Psoas muscle (tissue), 8 donors: ENCODE measurements at regions of chr10 and their contacts with region 1.

Region 1: GRCh38 chr10:13099666-13100348 is at the start of gene OPTN:
- DNase-seq: peak; percentile 79 to 91
- ATAC-seq: peak; percentile 80 to 89 (median 88)
- H3K4me3 ChIP-seq: peak within 1 kb of the TSS; percentile 99
- H3K27ac ChIP-seq: peak within 1 kb of the TSS; percentile 99
- H3K4me1 ChIP-seq: peaks cover 13% of the 10 kb centered on the region
- H3K27me3 ChIP-seq: no peaks in the 10 kb centered on the region
- CTCF ChIP-seq: peak; percentile 72
- total RNA-seq, gene OPTN: 178 to 561 (median 312) TPM

Region 2: DNA sequence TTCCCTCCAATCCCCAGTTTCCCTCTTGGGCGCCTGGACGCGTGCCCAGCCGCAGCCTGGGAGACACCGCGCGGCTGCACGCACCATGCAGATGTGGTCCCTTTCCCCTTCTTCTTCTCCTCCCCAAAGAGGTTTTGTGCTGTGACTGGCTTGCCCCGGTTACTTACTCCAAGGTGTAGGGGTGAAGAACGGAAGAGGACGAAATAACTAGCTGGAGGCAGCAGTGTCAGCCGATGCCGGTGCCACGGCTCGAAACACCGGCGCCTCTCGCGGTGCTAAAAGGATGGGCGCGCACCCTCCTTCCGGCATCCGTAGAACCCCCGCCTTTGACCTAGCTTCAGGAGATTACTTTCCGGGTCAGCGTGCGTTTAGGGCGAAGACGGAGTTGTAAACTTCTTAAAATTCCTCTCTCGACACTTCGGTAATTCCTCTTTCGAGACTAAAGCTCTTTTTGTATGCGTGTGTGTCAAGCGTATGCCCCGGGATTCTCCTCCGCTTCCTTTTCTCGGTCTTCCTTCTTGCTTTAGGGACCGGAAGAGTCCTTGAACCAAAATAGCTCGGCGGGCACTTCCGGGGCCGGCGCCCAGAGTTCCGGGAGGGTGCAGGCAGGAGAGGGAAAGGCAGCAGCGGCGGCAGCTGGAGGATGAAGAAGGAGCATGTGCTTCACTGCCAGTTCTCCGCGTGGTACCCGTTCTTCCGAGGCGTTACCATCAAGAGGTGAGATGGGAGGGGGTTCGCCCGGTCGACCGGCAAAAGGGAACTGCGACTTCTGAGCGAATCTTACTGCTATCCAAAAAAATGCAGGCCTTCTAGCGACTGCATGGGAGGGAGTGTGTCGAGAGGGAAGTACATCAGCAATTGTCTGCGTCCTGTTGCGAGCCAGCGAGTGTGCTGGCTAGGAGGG is 904.0 kb before region 1 on chr10 and contains the starts of genes CDC123 and NUDT5:
- intact Hi-C with region 1: loop called in 1 of 2 experiments (anchors 5 kb)
- DNase-seq: peak; percentile 86 to 91
- ATAC-seq: peak; percentile 96 to 98 (median 98)
- H3K4me3 ChIP-seq: peak within 1 kb of the TSS; percentile 98
- H3K27ac ChIP-seq: peak within 1 kb of the TSS; percentile 97
- H3K4me1 ChIP-seq: peaks cover 20% of the 10 kb centered on the region
- H3K27me3 ChIP-seq: no peaks in the 10 kb centered on the region
- CTCF ChIP-seq: no peak
- total RNA-seq, gene CDC123: 29.1 to 46.1 (median 38.6) TPM
- total RNA-seq, gene NUDT5: 4.8 to 5.2 (median 5.2) TPM

Region 3: DNA sequence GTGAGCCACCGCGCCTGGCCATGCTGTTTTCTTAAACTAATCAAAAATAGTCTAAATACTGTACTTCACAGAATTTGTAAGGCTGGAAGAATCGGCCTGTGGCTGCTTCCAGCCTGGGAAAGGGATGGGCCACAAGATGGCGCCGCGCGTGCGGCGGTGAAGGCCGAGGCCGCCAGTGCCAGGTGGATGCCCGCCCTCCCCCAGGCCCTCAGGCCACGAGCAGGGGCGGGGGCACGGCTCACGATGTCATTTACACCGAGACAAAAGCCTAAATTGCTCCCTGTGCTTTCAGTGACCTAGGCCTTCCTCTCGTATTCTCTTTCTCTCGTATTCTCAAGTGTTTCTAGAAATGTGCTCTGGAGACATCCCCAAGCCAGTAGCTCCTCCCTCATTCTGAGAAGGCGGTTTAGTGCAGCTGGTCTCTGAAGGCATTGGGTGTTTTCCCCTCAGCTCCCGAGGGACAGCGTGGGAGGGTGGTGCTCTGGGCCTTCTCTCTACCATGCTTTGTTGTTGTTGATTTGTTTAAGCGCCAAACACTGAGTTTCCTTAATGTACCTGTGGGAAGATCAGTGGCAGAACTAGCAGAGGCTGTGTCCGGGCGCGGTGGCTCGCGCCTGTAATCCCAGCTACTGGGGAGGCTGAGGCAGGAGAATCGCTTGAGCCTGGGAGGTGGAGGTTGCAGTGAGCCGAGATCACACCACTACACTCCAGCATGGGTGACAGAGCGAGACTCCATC is 835.4 kb before region 1 on chr10:
- intact Hi-C with region 1: loop called in 1 of 2 experiments (anchors 10 kb)
- DNase-seq: peak; percentile 75 to 84
- ATAC-seq: peak; percentile 64 to 96 (median 82)
- H3K4me3 ChIP-seq: peak overlapping the region; percentile 58
- H3K27ac ChIP-seq: no peak overlapping the region
- H3K4me1 ChIP-seq: no peaks in the 10 kb centered on the region
- H3K27me3 ChIP-seq: no peaks in the 10 kb centered on the region
- CTCF ChIP-seq: peak; percentile 64

Region 4: DNA sequence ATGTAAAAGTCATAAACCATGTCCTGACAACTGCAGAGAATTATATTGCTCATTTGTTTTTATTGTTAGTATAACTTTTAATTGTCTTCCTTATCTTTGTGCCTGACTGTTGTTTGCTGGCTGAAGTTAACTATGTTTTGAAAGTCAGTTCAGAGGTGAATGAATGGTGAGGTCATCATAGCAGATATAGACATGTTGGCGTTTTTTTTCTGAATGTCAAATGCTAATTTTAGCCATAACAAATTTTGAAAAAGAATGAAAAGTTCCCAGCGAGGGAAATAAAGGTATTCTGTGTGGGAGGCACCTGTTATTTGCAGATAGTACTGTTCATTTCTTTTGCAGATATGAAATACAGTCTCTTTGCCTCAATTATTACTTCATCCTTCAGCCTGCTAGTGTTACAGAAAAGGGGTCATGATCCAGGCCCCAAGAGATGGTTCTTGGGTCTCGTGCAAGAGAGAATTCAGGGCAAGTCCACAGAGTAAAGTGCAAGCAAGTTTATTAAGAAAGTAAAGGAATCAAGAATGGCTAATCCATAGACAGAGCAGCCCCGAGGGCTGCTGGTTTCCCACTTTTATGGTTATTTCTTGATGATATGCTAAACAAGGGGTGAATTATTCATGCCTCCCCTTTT is 654.0 kb before region 1 on chr10:
- intact Hi-C with region 1: no loop called
- DNase-seq: no peak
- ATAC-seq: no peak
- H3K4me3 ChIP-seq: no peak overlapping the region
- H3K27ac ChIP-seq: no peak overlapping the region
- H3K4me1 ChIP-seq: no peaks in the 10 kb centered on the region
- H3K27me3 ChIP-seq: no peaks in the 10 kb centered on the region
- CTCF ChIP-seq: no peak

Region 5: DNA sequence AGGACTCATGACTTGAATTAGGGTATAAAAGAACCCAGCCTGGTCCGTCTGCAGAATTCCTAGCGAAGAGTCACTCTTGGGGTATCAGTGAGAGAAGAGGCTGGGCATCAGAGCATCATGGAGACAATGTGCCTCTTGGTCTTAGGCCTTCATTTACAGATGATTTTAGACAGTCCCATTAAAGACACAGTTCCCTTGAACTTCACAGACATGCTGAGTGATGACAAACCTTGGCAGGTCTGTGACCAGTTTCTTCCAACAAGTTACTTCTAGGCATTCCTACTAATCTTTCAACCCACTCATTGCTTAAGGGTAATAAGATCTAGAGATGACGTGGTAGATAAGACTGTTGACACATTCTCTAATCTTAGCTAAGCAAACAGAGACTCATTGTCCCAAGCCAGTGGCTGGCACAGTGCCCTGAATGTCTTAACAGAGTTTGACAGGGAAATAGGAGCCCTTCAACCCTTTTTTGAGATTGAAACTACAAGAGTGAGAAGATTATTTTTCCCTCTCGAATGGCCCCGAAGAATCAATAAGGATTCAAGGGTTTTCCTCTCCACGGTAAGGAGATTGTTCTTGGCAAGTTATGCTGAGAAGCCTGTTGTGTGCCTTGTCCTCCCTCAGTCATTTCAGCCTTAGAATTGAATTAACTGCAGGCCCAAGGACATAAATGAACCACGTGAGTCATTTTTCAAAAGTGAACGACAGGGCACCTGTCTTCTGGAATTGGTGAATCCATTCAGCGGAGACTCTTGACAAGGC is 379.4 kb before region 1 on chr10:
- intact Hi-C with region 1: loop called in 1 of 2 experiments (anchors 5 kb)
- DNase-seq: peak; percentile 87 to 91
- ATAC-seq: peak; percentile 85 to 95 (median 94)
- H3K4me3 ChIP-seq: no peak overlapping the region
- H3K27ac ChIP-seq: peak overlapping the region; percentile 69
- H3K4me1 ChIP-seq: no peaks in the 10 kb centered on the region
- H3K27me3 ChIP-seq: no peaks in the 10 kb centered on the region
- CTCF ChIP-seq: no peak

Region 6: DNA sequence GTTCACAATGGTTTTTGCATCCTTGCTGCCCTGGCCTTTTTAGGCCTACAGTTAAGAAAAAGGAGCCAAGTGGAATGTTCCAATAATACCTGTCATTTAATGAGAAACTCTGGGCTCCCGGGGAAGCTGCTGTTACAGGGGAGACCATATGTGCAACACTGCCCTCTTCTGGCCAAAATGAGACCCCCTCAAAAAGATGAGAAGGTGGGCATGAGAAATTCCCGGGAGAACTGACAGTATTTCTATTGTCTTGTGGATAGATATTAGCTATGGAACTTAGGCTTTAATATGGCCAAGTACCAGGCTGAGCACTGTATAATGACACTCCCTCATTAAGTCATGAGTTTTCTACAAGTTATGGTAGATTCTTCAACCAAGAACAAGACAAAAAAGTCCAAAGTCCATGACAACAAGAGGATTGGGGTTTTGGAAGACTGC is 197.7 kb before region 1 on chr10:
- intact Hi-C with region 1: loop called (anchors 10 kb)
- DNase-seq: no peak
- ATAC-seq: peak in 1 of 4 donors; percentile 69
- H3K4me3 ChIP-seq: no peak overlapping the region
- H3K27ac ChIP-seq: no peak overlapping the region
- H3K4me1 ChIP-seq: no peaks in the 10 kb centered on the region
- H3K27me3 ChIP-seq: no peaks in the 10 kb centered on the region
- CTCF ChIP-seq: peak; percentile 63

Region 7: DNA sequence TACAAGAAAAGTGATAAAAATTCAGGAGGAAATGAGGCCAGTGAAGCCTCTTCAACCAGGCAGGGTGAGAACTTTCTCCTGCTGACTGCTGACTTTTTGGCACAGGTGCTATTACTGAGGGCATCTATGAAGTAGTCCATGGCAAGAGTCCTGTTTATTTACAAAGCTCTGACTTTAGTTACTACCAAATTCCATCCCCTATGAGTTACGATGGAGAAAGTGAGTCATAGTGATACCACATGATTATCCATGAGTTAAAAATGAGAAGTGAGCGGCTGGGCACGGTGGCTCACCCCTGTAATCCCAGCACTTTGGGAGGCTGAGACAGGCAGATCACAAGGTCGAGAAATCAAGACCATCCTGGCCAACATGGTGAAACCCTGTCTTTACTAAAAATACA is 118.2 kb before region 1 on chr10:
- intact Hi-C with region 1: no loop called
- DNase-seq: no peak
- ATAC-seq: peak in 2 of 4 donors; percentile 32 to 60
- H3K4me3 ChIP-seq: no peak overlapping the region
- H3K27ac ChIP-seq: no peak overlapping the region
- H3K4me1 ChIP-seq: no peaks in the 10 kb centered on the region
- H3K27me3 ChIP-seq: no peaks in the 10 kb centered on the region
- CTCF ChIP-seq: no peak

Region 8: GRCh38 chr10:13183625-13184024 is 83.8 kb after region 1 on chr10:
- intact Hi-C with region 1: no loop called
- DNase-seq: no peak
- ATAC-seq: no peak
- H3K4me3 ChIP-seq: no peak overlapping the region
- H3K27ac ChIP-seq: no peak overlapping the region
- H3K4me1 ChIP-seq: peaks cover 15% of the 10 kb centered on the region
- H3K27me3 ChIP-seq: no peaks in the 10 kb centered on the region
- CTCF ChIP-seq: no peak